Endothelial cell of umbilical vein (primary cell): ENCODE measurements at regions of chr7 and their contacts with region 1.

Region 1: DNA sequence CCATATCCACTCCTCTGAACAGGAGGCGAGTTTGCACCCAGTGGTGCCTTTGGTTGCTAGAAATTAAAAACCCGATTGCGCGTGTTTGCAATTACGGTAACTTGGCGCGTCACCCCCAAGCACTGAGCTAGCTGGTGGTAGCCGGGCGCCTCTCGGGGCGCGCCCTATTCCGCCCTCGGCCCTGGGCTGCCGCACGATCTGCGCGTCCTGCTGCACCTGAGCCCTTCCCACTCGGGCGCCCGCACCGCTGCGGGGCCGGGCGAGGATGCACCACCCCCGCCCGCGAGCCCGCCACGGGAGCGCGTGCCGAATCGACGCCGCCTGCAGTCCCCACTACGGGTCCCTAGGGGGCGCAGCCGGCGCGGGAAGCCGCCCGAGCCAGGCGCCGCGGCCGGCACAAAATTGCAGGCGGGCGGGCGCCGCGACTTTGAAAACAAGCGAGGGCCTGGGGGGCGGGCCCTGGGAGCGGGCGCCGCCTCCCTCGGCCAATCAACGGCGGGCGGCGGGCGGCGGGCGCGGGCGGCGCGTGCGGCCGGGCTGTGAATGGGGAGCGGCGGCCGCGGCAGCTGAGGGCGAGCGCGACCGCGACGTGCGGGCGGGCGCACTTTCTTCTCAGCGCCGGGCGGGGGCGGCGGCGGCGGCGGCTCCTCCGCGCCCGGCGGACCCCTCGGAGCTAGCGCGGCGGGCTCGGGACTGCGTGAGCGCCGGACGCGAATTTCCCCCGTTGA is at the start of gene SDK1:
- DNase-seq: peak; percentile 86
- H3K4me3 ChIP-seq: peak within 1 kb of the TSS in 2 of 3 experiments; percentile 41 to 43
- H3K27ac ChIP-seq: no peak within 1 kb of the TSS
- H3K4me1 ChIP-seq: peaks cover 6% of the 10 kb centered on the region
- H3K27me3 ChIP-seq: peaks cover 25 to 33% of the 10 kb centered on the region in 2 experiments
- CTCF ChIP-seq: peak; percentile 85 to 88
- POLR2A ChIP-seq: no peak
- total RNA-seq, gene SDK1: 2.4 and 3.9 TPM in 2 replicates

Region 2: DNA sequence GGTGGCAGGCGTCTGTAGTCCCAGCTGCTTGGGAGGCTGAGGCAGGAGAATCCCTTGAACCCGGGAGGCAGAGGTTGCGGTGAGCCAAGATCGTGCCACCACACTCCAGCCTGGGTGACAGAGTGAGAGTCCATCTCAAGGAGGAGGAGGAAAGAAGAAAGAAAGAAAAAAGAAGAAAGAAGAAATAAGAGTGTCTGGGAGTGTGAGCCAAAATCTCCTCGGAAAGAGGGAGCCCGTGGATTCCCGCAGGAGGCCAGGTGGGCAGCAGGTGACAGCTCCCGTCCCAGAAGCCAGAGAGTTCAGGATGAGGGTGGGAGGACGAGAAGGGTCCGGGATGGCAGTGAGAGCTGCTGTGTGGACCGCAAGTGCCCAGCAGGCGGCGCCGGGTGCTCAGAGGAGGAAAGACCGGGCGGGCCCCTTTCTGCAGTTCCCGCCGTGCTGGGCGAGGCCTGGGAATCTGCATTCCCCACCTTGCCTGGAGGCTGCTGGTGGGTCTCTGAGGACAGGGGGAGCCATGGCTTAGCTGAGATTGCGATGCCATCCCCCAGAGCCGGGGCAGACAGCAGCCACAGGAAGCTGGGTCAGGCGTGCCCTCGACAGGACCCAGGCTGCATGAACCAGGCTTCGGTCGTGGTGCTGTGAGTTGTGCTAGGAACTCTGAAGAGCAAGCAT is 630.0 kb before region 1 on chr7:
- CTCF ChIA-PET with region 1: no interaction called
- POLR2A ChIA-PET with region 1: no interaction called
- dilution Hi-C with region 1: no loop called
- intact Hi-C with region 1: loop called (anchors 5 kb)
- DNase-seq: peak; percentile 35
- H3K4me3 ChIP-seq: no peak overlapping the region
- H3K27ac ChIP-seq: no peak overlapping the region
- H3K4me1 ChIP-seq: no peaks in the 10 kb centered on the region
- H3K27me3 ChIP-seq: peaks cover 0 to 3% of the 10 kb centered on the region in 2 experiments
- CTCF ChIP-seq: peak; percentile 84 to 95
- POLR2A ChIP-seq: no peak

Region 3: GRCh38 chr7:3274131-3274530 is 26.7 kb before region 1 on chr7:
- CTCF ChIA-PET with region 1: interaction called, 4 read pairs
- POLR2A ChIA-PET with region 1: interaction called, 13 read pairs
- dilution Hi-C with region 1: no loop called
- intact Hi-C with region 1: no loop called
- DNase-seq: no peak
- H3K4me3 ChIP-seq: no peak overlapping the region
- H3K27ac ChIP-seq: no peak overlapping the region
- H3K4me1 ChIP-seq: no peaks in the 10 kb centered on the region
- H3K27me3 ChIP-seq: no peaks in the 10 kb centered on the region
- CTCF ChIP-seq: no peak
- POLR2A ChIP-seq: no peak

Region 4: GRCh38 chr7:3897438-3898385 is 596.9 kb after region 1 on chr7:
- CTCF ChIA-PET with region 1: interaction called, 5 read pairs
- POLR2A ChIA-PET with region 1: no interaction called
- dilution Hi-C with region 1: no loop called
- intact Hi-C with region 1: loop called (anchors 1 kb)
- DNase-seq: peak; percentile 55
- H3K4me3 ChIP-seq: no peak overlapping the region
- H3K27ac ChIP-seq: no peak overlapping the region
- H3K4me1 ChIP-seq: no peaks in the 10 kb centered on the region
- H3K27me3 ChIP-seq: no peaks in the 10 kb centered on the region
- CTCF ChIP-seq: peak; percentile 49 to 69
- POLR2A ChIP-seq: no peak

Region 5: DNA sequence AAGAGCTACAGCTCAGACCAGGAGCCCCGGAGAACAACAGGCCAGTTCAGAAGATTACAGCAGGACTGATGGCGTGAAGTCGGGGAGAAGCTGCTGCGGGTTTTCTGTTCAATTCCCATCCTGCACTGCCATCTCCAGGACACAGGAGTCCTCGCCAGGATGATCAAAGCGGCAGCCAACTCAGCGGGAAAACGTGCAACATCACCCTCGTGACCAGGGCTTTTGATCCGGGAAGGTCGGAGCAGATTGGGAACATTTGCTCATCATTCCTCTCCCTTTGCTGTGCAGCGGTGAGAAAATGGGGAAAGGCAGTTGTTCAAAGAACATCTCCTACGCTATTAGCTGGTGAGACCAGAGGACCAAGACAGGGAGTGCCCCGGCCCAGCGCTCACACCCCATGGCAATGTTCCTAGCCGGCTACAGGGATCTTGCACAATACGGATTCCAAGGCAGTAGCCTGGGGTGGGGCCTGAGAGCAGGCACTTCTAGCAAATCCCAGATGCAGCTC is 1330.9 kb after region 1 on chr7:
- CTCF ChIA-PET with region 1: interaction called, 3 read pairs
- POLR2A ChIA-PET with region 1: no interaction called
- dilution Hi-C with region 1: no loop called
- intact Hi-C with region 1: loop called (anchors 1 kb)
- DNase-seq: peak; percentile 76
- H3K4me3 ChIP-seq: no peak overlapping the region
- H3K27ac ChIP-seq: no peak overlapping the region
- H3K4me1 ChIP-seq: peaks cover 3% of the 10 kb centered on the region
- H3K27me3 ChIP-seq: no peaks in the 10 kb centered on the region
- CTCF ChIP-seq: peak; percentile 65 to 66
- POLR2A ChIP-seq: no peak